ENCODE measurements at regions of chr17 and their contacts with region 1.

Region 1: GRCh38 chr17:47999582-47999981 is 28.7 kb downstream of the CDK5RAP3 start:
- DNase-seq: peak in 1 of 35 experiments; percentile 22
- ATAC-seq: peak in 1 of 4 experiments; percentile 68
- H3K4me3 ChIP-seq: no peak overlapping the region
- H3K4me3 Mint-ChIP-seq: no peak overlapping the region
- H3K27ac ChIP-seq: no peak overlapping the region
- H3K27ac Mint-ChIP-seq: no peak overlapping the region
- H3K4me1 ChIP-seq: no peaks in the 10 kb centered on the region
- H3K4me1 Mint-ChIP-seq: peaks cover 0 to 5% (median 1%) of the 10 kb centered on the region in 3 donors
- H3K27me3 ChIP-seq: peaks cover 0 to 27% of the 10 kb centered on the region in 2 experiments
- H3K27me3 Mint-ChIP-seq: peaks cover 9 to 16% of the 10 kb centered on the region in 2 donors

Region 2: DNA sequence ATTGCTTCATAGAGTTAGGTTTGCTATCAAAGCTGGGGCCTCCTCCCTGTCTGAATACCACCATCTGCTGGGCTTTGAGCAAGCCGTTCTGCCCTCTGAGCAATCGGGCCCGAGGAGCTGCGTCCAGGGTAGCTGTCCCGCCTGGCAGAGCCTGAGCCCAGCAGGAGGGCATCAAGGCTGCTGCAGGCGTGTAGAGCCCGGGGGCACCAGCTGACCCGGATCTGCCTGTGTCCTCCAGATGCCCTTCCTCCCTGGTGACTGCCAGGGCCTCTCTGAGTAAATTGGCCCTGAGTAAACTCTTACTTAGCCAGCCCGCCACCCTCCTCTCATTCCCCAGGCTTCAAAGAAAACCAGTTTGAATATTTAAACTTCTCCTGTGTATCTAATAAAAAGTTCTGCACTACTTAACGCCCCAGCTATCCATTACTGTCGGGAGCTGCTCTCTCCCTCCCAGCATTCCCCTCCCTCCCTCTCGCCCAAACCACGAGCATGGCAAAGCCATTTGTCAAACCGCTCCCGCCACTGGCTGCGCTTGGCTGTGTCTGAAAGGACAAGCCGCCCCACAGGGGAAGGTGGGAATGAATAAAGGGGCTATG is 12.2 kb before region 1 on chr17:
- CTCF ChIA-PET with region 1: no interaction called
- POLR2A ChIA-PET with region 1: no interaction called
- DNase-seq: no peak
- ATAC-seq: no peak
- H3K4me3 ChIP-seq: no peak overlapping the region
- H3K4me3 Mint-ChIP-seq: no peak overlapping the region
- H3K27ac ChIP-seq: no peak overlapping the region
- H3K27ac Mint-ChIP-seq: no peak overlapping the region
- H3K4me1 ChIP-seq: peaks cover 0 to 7% of the 10 kb centered on the region in 2 experiments
- H3K4me1 Mint-ChIP-seq: peaks cover 0 to 6% (median 0%) of the 10 kb centered on the region in 3 donors
- H3K27me3 ChIP-seq: peaks cover 0 to 8% of the 10 kb centered on the region in 2 experiments
- H3K27me3 Mint-ChIP-seq: no peaks in the 10 kb centered on the region

Region 3: DNA sequence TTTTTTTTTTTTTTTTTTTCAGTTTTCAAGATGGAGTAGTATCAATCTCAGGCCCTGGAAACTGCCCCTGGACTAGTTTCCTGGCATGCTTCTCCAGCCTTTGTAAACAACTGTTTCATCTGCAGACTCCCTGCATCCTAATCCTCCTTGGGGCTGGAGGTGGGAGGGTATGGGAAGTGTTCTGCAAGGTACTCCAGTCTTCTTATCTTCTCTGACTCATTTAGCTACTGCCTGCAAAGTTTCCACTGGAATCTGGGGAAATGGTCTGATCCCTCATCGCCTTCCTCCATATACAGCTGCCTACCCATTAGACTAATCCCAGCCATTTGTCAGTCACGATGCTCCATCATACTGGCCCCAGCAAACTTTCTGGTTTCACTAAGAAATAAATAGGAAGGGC is 16.5 kb after region 1 on chr17:
- CTCF ChIA-PET with region 1: no interaction called
- POLR2A ChIA-PET with region 1: no interaction called
- DNase-seq: no peak
- ATAC-seq: no peak
- H3K4me3 ChIP-seq: no peak overlapping the region
- H3K4me3 Mint-ChIP-seq: no peak overlapping the region
- H3K27ac ChIP-seq: no peak overlapping the region
- H3K27ac Mint-ChIP-seq: no peak overlapping the region
- H3K4me1 ChIP-seq: peaks cover 6 to 16% of the 10 kb centered on the region in 2 experiments
- H3K4me1 Mint-ChIP-seq: peaks cover 16 to 21% (median 16%) of the 10 kb centered on the region in 3 donors
- H3K27me3 ChIP-seq: peaks cover 0 to 54% of the 10 kb centered on the region in 2 experiments
- H3K27me3 Mint-ChIP-seq: peaks cover 34 to 37% of the 10 kb centered on the region in 2 donors

Region 4: GRCh38 chr17:48113201-48113676 is 113.7 kb after region 1 on chr17:
- CTCF ChIA-PET with region 1: interaction called in 1 of 2 experiments, 10 read pairs
- POLR2A ChIA-PET with region 1: no interaction called
- DNase-seq: peak; percentile 40 to 73 (median 54)
- ATAC-seq: peak; percentile 90 to 97 (median 96)
- H3K4me3 ChIP-seq: no peak overlapping the region
- H3K4me3 Mint-ChIP-seq: peak overlapping the region; percentile 37 to 49 (median 47)
- H3K27ac ChIP-seq: peak overlapping the region; percentile 57
- H3K27ac Mint-ChIP-seq: peak overlapping the region; percentile 92 to 95
- H3K4me1 ChIP-seq: peaks cover 20 to 43% of the 10 kb centered on the region in 2 experiments
- H3K4me1 Mint-ChIP-seq: peaks cover 37 to 46% (median 45%) of the 10 kb centered on the region in 3 donors
- H3K27me3 ChIP-seq: no peaks in the 10 kb centered on the region
- H3K27me3 Mint-ChIP-seq: no peaks in the 10 kb centered on the region